CD8-positive, alpha-beta memory T cell (primary cell): ENCODE measurements at regions of chr18 and their contacts with region 1.

Region 1: GRCh38 chr18:2571200-2572143 is at the starts of genes METTL4 and NDC80:
- DNase-seq: peak; percentile 73 to 89 (median 79)
- H3K4me3 ChIP-seq: peak within 1 kb of the TSS; percentile 98
- H3K4me3 Mint-ChIP-seq: peak within 1 kb of the TSS; percentile 98 to 100 (median 99)
- H3K27ac ChIP-seq: peak within 1 kb of the TSS; percentile 100
- H3K27ac Mint-ChIP-seq: peak within 1 kb of the TSS; percentile 98 to 100 (median 100)
- H3K4me1 ChIP-seq: peaks cover 28% of the 10 kb centered on the region
- H3K4me1 Mint-ChIP-seq: peaks cover 54 to 80% (median 74%) of the 10 kb centered on the region in 3 donors
- H3K27me3 ChIP-seq: no peaks in the 10 kb centered on the region
- H3K27me3 Mint-ChIP-seq: peaks cover 0 to 2% of the 10 kb centered on the region in 2 donors
- total RNA-seq, gene METTL4: 21.4 to 22.8 TPM
- total RNA-seq, gene NDC80: 41.6 to 44.4 TPM

Region 2: DNA sequence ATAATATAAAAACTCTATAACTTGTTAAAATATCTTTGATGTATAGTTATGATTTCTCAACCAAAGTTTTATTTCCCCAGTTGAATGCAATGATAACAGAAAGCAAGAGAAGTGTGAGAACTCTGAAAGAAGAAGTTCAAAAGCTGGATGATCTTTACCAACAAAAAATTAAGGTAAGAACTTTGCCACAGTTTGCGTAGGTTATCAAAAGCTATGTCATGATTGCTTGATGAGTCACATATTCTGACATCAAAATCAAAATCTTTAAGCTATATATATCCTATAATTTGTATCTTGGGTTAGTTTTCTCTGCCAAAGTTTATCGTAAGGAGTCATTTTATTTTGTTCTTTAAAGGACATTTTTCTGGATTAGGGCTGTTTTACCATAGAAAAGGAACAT is 34.9 kb after region 1 on chr18:
- CTCF ChIA-PET with region 1: interaction called, 7 read pairs
- POLR2A ChIA-PET with region 1: interaction called, 15 read pairs
- DNase-seq: peak in 2 of 5 donors; percentile 44 to 46
- H3K4me3 ChIP-seq: no peak overlapping the region
- H3K4me3 Mint-ChIP-seq: peak overlapping the region; percentile 61 to 78 (median 71)
- H3K27ac ChIP-seq: peak overlapping the region; percentile 3
- H3K27ac Mint-ChIP-seq: peak overlapping the region; percentile 61 to 95 (median 92)
- H3K4me1 ChIP-seq: peaks cover 38% of the 10 kb centered on the region
- H3K4me1 Mint-ChIP-seq: peaks cover 49 to 72% (median 64%) of the 10 kb centered on the region in 3 donors
- H3K27me3 ChIP-seq: no peaks in the 10 kb centered on the region
- H3K27me3 Mint-ChIP-seq: no peaks in the 10 kb centered on the region

Region 3: GRCh38 chr18:2636126-2636631 is 64.7 kb after region 1 on chr18:
- CTCF ChIA-PET with region 1: interaction called, 24 read pairs
- POLR2A ChIA-PET with region 1: interaction called, 63 read pairs
- DNase-seq: no peak
- H3K4me3 ChIP-seq: peak overlapping the region; percentile 51
- H3K4me3 Mint-ChIP-seq: peak overlapping the region; percentile 81 to 88 (median 86)
- H3K27ac ChIP-seq: peak overlapping the region; percentile 82
- H3K27ac Mint-ChIP-seq: peak overlapping the region; percentile 97 to 99 (median 98)
- H3K4me1 ChIP-seq: peaks cover 68% of the 10 kb centered on the region
- H3K4me1 Mint-ChIP-seq: peaks cover 93 to 100% (median 95%) of the 10 kb centered on the region in 3 donors
- H3K27me3 ChIP-seq: no peaks in the 10 kb centered on the region
- H3K27me3 Mint-ChIP-seq: no peaks in the 10 kb centered on the region

Region 4: DNA sequence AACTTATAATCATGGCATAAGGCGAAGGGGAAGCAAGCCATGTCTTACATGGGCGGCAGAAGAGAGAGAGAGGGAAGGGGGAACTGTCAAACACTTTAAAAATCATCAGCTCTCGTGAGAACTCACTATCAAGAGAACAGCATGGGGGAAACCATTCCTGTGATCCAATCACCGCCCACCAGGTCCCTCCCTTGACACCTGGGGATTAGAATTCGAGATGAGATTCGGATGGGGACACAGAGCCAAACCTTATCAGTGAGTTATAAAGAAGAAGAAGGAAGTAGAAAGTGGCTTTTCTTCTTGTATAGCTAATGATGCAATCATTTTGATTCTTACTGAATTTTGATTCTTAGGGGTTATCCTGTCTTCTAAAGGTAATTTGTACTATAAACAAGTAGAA is 135.4 kb after region 1 on chr18:
- CTCF ChIA-PET with region 1: no interaction called
- POLR2A ChIA-PET with region 1: no interaction called
- DNase-seq: no peak
- H3K4me3 ChIP-seq: no peak overlapping the region
- H3K4me3 Mint-ChIP-seq: no peak overlapping the region
- H3K27ac ChIP-seq: no peak overlapping the region
- H3K27ac Mint-ChIP-seq: peak overlapping the region in 5 of 8 donors; percentile 53 to 78 (median 55)
- H3K4me1 ChIP-seq: no peaks in the 10 kb centered on the region
- H3K4me1 Mint-ChIP-seq: peaks cover 36 to 54% (median 47%) of the 10 kb centered on the region in 3 donors
- H3K27me3 ChIP-seq: no peaks in the 10 kb centered on the region
- H3K27me3 Mint-ChIP-seq: no peaks in the 10 kb centered on the region